AG04449 (cell line): ENCODE measurements at regions of chr2 and their contacts with region 1.

Region 1: DNA sequence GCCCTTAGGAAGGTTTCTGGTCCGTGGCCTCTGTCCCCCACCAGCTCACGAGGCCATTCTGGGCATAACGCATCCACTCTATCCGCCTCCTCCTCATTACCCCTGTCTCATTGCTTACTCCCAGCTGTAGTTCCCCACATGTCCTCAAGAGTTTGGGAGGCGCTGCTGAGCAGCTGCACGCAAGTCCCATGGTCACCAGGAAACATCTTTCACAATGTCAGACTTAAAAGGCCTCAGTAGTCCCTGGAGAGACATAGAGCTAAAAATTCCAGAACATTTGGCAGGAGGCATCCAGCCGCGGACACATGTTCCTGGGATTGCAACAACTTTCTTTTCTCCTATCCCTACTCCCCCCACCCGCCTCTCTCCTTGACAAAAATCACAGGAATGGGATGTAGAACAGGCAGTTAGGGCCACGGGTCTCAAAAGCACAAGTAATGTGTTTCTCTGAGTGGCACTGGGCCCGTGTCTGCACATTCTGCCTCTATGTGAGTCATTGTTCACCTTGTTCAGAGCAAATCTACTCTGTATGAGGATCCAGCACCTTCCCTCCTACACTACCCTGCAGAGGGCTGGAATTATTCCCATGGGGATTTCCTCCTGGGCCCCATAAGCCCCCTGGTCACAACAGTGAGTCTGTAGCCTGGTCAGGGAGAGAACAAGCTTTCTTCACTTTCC is 8.1 kb downstream of the LBH start:
- DNase-seq: peak; percentile 45
- H3K4me3 ChIP-seq: no peak overlapping the region
- CTCF ChIP-seq: peak; percentile 97

Region 2: GRCh38 chr2:29894822-29895614 is 344.4 kb before region 1 on chr2:
- CTCF ChIA-PET with region 1: no interaction called
- POLR2A ChIA-PET with region 1: no interaction called
- DNase-seq: no peak
- H3K4me3 ChIP-seq: no peak overlapping the region
- CTCF ChIP-seq: no peak

Region 3: GRCh38 chr2:30225131-30225762 is 14.2 kb before region 1 on chr2:
- CTCF ChIA-PET with region 1: interaction called, 17 read pairs
- POLR2A ChIA-PET with region 1: interaction called, 24 read pairs
- DNase-seq: peak; percentile 65
- H3K4me3 ChIP-seq: peak overlapping the region; percentile 53
- CTCF ChIP-seq: no peak

Region 4: DNA sequence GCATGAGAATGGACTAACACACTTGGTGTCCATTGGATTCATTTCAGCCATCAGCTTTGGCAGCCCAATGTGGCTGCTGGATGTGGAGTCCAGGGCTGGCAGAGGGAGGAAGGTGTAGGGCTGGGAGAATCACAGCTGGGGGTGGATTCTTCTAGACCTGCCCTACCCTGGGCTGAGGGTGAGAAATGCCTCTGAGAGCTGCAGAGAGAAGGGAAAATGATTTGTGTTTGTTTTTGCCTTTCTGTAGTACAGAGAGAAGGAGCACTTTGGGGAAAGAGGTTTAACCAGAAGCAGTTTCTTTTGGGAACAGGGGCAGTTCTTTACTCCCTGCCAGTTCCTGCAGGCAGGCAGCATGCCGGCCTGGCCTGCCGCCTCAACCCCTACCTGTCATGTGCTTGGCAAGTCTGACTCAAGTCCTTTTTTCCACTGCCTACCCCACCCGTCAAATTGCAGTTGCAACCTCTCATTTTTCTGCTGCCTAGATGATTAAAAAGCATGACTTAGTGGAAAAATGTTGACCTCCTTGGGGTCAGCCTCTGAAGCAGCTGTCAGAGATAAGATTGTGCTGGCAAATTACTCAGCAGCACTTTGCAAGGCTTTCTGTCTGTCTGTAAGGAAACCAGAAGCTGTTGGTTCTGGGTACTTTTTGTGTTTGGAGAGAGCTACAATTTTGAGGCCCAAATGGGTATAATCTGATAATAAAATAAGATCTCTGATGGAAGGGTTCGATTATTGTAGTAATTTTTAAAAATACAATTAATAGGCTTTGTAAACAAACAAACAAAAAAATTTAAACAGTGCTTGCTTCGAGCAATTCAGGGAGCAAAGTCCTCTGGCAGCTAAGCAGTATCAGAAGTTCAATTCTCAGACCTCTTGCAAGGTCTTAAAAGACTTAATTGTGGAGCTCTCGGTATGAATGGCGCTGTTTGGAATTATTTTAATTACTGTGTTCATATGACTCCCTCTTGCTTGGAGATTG is 13.6 kb after region 1 on chr2:
- CTCF ChIA-PET with region 1: interaction called, 27 read pairs
- POLR2A ChIA-PET with region 1: interaction called, 4 read pairs
- DNase-seq: no peak
- H3K4me3 ChIP-seq: no peak overlapping the region
- CTCF ChIP-seq: no peak